Activated T-helper 1 cell treated with anti-CD3 and anti-CD28 coated beads, Interleukin-12 subunit alpha, Interleukin-12 subunit beta, Interleukin-2, Interleukin-4 antibody, amounts not matched to agents 30 ng/mL and 10 ng/mL and 1 ng/mL, durations not matched to agents 14 hours and 24 hours and 36 hours (primary cell): ENCODE measurements at regions of chr16 and their contacts with region 1.

Region 1: GRCh38 chr16:12750554-12750918 is 53.2 kb downstream of the CPPED1 start:
- DNase-seq: no peak
- H3K4me3 Mint-ChIP-seq: peak overlapping the region; percentile 58
- H3K27ac Mint-ChIP-seq: peak overlapping the region; percentile 77
- H3K4me1 Mint-ChIP-seq: peaks cover 33% of the 10 kb centered on the region
- H3K27me3 Mint-ChIP-seq: no peaks in the 10 kb centered on the region

Region 2: DNA sequence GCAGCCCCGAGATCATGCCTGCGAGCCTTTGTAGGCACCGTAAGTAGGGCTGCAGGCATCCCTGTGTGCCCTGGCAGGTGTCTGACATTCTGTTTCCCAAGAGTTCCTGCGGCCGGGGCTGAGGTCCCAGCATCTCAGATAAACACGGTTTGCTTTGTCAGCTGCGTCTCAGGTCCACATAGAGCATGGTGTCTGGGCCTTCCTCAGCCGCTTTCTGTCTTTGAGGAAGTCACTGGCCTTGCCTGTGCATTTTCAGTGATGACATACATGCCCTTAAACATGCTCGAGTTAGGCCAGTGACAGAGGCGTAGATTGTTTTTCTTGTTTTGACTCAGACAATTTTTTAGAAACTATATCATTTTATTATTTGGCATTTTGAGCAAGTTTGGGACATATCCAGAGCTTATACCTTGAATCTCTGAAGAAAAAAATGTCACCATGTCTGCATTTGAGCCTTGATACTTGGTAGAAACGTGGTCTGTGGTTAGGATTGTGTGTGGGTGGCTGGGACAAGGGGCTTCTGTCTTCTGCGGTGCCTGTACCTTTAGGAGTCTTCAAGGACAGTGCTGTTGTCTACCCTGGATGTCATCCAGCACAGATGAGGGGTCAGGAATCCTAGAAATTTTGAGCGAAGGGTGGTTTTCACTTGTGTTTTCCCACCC is 668.2 kb before region 1 on chr16:
- intact Hi-C with region 1: loop called (anchors 2 kb)
- DNase-seq: no peak
- H3K4me3 Mint-ChIP-seq: no peak overlapping the region
- H3K27ac Mint-ChIP-seq: peak overlapping the region; percentile 71
- H3K4me1 Mint-ChIP-seq: peaks cover 51% of the 10 kb centered on the region
- H3K27me3 Mint-ChIP-seq: no peaks in the 10 kb centered on the region

Region 3: DNA sequence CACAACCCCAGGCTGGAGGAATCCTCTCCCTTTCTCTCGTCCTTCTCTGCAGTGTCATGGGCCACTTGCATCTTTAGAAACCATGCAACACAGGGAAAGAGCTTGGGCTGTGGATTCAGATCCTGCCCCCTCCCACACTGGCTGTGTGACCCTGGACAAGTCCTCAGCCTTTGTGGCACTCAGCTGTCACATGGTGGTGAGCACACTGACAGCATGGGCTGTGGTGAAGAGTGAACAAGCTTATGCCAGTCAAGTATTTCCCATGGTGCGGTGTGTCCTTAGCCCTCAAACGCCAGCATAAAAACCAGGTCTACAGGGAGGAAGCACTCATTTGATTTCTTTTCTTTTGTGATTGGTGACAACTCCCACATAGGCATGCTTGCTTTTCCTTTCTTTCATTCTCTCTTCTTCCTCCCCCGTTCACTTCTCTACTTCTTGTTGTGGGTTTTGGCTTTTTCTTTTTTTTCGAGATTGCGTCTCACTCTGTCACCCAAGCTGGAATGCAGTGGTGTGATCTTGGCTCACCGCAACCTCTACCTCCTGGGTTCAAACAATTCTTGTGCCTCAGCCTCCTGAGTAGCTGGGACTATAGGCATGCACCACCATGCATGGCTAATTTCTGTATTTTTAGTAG is 261.1 kb before region 1 on chr16:
- intact Hi-C with region 1: no loop called
- DNase-seq: no peak
- H3K4me3 Mint-ChIP-seq: no peak overlapping the region
- H3K27ac Mint-ChIP-seq: no peak overlapping the region
- H3K4me1 Mint-ChIP-seq: peaks cover 12% of the 10 kb centered on the region
- H3K27me3 Mint-ChIP-seq: no peaks in the 10 kb centered on the region

Region 4: DNA sequence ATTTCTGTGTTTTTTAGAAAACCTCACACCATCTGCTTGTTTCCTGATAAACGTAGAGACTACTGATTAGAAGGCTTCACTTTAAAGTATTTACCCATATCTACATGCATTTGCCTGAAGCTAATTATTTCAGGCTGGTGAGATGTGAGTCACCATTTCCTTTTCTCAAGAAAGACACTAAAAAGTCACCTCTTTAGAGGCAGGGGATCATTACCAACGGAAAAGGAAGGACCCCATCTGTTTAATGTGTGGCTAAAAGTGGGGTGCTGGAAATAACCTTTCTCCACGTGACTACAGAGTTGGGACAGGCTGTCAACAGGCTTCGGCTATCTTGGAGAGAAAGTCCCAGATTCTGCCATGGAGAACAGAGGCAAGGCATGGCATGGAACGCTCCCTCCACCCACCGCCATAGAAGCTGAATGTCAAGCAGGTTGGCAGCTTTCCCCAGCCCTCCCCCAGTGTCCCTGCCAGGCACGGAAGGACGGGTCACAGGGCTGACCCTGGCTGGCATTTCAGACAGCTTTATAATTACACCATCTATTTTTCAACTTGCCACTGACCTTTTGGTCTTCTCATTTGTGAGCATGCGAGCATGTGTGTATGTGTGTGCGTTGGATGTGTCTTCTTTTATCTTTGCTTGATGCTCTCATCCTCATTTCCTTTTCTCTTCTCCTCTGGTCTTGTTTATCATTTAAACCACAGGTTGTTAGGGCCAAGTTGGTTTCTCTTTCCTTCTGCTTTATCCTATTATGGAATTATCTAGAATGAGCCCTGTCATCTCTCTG is 103.9 kb before region 1 on chr16:
- intact Hi-C with region 1: loop called (anchors 1 kb)
- DNase-seq: peak; percentile 26
- H3K4me3 Mint-ChIP-seq: peak overlapping the region; percentile 38
- H3K27ac Mint-ChIP-seq: peak overlapping the region; percentile 94
- H3K4me1 Mint-ChIP-seq: peaks cover 26% of the 10 kb centered on the region
- H3K27me3 Mint-ChIP-seq: no peaks in the 10 kb centered on the region

Region 5: DNA sequence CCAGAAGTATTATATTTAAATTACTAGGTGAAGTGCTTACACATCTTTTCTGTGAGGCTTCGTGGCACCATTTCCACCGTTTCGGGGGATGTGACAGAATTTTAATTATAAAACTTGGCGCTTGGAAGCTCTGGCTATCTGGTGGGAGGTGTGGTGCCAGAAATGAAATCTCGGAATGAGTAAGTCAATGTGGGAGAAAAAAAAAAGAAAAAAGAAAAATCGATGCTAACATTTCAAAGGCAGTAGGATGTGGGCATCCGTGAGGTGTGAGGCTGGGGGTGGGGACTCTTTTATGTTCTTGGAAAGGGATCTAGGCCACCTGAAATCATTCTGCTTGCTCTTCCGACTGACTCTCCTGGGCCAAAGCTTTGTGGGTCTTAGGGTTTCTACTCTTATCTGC is 31.2 kb after region 1 on chr16:
- intact Hi-C with region 1: loop called (anchors 1 kb)
- DNase-seq: no peak
- H3K4me3 Mint-ChIP-seq: no peak overlapping the region
- H3K27ac Mint-ChIP-seq: peak overlapping the region; percentile 70
- H3K4me1 Mint-ChIP-seq: peaks cover 7% of the 10 kb centered on the region
- H3K27me3 Mint-ChIP-seq: no peaks in the 10 kb centered on the region

Region 6: DNA sequence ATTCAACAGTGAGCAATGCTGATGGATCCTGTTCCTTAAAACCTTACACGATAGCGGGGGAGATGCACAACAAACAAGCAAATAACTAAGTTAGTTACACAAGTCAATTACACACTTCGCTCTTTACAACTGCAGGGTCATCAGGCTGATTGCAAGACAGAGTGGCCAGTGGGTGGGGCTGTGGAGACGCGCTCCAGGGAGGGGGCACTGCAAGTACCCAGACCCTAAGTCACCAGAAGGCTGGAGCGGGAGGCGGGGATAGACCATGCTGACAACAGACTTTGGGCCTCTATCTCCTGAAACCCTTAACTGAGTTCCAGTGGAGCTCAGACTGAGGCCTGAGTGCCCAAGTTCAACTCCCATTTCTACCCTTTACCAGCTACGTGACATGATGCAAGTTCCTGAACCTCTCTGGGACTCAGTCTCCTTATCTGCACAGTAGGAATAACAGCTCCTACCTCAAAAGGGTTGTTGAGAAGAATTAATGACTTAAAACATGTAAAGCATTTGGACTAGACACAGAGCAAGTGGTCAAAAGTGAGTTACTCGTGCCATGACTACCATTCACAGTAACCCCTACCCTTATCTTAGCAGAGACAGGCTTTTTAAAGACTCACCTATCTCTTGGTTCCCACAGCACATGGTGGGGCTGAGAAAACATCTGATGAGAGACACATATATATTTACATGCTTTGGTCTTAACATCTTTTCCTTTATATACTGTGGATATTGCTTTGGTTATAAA is 42.8 kb after region 1 on chr16:
- intact Hi-C with region 1: no loop called
- DNase-seq: no peak
- H3K4me3 Mint-ChIP-seq: no peak overlapping the region
- H3K27ac Mint-ChIP-seq: no peak overlapping the region
- H3K4me1 Mint-ChIP-seq: no peaks in the 10 kb centered on the region
- H3K27me3 Mint-ChIP-seq: no peaks in the 10 kb centered on the region

Region 7: DNA sequence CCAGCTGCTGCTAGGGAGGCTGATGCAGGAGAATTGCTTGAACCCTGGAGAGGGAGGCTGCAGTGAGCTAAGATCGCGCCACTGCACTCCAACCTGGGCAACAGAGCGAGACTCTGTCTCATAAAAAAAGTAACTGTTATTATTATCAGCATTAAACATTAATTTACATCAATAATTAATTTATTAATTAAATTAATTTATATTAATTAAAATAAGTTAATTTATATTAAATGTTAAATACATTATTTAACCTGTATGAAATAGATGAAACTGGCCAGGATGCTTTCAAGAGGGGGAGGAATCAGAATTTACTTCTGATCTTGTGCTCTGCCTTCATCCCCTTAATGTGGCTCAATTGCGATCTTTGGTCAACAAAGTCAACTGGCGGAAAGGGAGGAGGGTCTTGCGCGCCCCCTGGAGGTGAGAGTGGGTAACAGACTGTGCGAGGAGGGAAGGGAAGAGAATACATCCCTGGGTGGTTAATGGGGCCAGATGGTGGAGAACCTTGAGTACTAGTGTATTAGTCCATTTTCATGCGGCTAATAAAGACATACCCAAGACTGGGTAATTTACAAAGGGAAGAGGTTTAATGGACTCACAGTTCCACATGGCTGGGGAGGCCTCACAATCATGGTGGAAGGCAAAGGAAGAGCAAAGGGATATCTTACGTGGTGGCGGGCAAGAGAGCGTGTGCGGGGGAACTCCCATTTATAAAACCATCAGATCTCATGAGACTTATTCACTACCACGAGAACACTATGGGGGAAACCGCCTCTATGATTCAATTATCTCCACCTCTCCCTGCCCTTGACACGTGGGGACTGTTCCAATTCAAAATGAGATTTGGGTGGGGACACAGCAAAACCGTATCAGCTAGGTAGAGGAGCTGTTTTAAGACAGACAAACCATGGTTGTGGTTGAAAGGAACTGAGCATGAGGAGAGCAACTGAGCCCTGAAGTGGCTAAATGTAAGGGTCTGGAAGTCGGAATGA is 68.9 kb after region 1 on chr16:
- intact Hi-C with region 1: loop called (anchors 5 kb)
- DNase-seq: peak; percentile 64
- H3K4me3 Mint-ChIP-seq: no peak overlapping the region
- H3K27ac Mint-ChIP-seq: no peak overlapping the region
- H3K4me1 Mint-ChIP-seq: peaks cover 12% of the 10 kb centered on the region
- H3K27me3 Mint-ChIP-seq: peaks cover 6% of the 10 kb centered on the region

Region 8: GRCh38 chr16:13168091-13168572 is 417.6 kb after region 1 on chr16:
- intact Hi-C with region 1: no loop called
- DNase-seq: no peak
- H3K4me3 Mint-ChIP-seq: no peak overlapping the region
- H3K27ac Mint-ChIP-seq: no peak overlapping the region
- H3K4me1 Mint-ChIP-seq: no peaks in the 10 kb centered on the region
- H3K27me3 Mint-ChIP-seq: no peaks in the 10 kb centered on the region